Activated naive CD8-positive, alpha-beta T cell treated with anti-CD3 and anti-CD28 coated beads, Interleukin-2, amount 10 ng/mL, durations not matched to agents 7 days and 5 days (primary cell): ENCODE measurements at regions of chr5 and their contacts with region 1.

Region 1: GRCh38 chr5:131263648-131264450 is at the start of gene CDC42SE2:
- DNase-seq: peak; percentile 96
- ATAC-seq: peak; percentile 86
- H3K4me3 Mint-ChIP-seq: peak within 1 kb of the TSS; percentile 90
- H3K27ac Mint-ChIP-seq: peak within 1 kb of the TSS; percentile 89
- H3K4me1 Mint-ChIP-seq: peaks cover 38% of the 10 kb centered on the region
- H3K27me3 Mint-ChIP-seq: no peaks in the 10 kb centered on the region
- total RNA-seq, gene CDC42SE2: 193 to 199 TPM

Region 2: GRCh38 chr5:131209506-131210150 is 54.2 kb before region 1 on chr5:
- POLR2A ChIA-PET with region 1: interaction called, 32 read pairs
- DNase-seq: peak; percentile 38
- ATAC-seq: peak; percentile 95
- H3K4me3 Mint-ChIP-seq: peak overlapping the region; percentile 83
- H3K27ac Mint-ChIP-seq: peak overlapping the region; percentile 95
- H3K4me1 Mint-ChIP-seq: peaks cover 37% of the 10 kb centered on the region
- H3K27me3 Mint-ChIP-seq: no peaks in the 10 kb centered on the region

Region 3: GRCh38 chr5:131242728-131243255 is 21.1 kb before region 1 on chr5:
- POLR2A ChIA-PET with region 1: no interaction called
- DNase-seq: no peak
- ATAC-seq: no peak
- H3K4me3 Mint-ChIP-seq: no peak overlapping the region
- H3K27ac Mint-ChIP-seq: no peak overlapping the region
- H3K4me1 Mint-ChIP-seq: peaks cover 6% of the 10 kb centered on the region
- H3K27me3 Mint-ChIP-seq: peaks cover 2% of the 10 kb centered on the region

Region 4: DNA sequence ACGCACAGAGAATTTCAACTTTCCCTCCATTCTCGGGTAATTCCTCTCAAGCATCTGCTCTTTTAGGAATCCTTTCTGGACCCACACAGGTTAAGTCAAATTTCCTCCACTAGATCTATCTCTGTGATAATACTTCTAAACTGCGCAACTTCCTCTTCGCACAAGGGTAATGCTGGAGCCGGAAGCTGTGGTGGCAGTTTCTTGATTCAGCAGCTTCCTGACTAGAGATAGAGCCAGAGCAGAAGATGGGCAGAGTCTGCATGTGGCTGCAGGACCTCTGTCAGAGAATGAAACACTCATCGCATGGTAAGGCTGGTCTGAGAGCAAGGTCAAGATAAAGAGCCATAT is 11.1 kb before region 1 on chr5:
- POLR2A ChIA-PET with region 1: interaction called, 113 read pairs
- DNase-seq: peak; percentile 70
- ATAC-seq: peak; percentile 80
- H3K4me3 Mint-ChIP-seq: peak overlapping the region; percentile 98
- H3K27ac Mint-ChIP-seq: peak overlapping the region; percentile 98
- H3K4me1 Mint-ChIP-seq: peaks cover 61% of the 10 kb centered on the region
- H3K27me3 Mint-ChIP-seq: no peaks in the 10 kb centered on the region

Region 5: DNA sequence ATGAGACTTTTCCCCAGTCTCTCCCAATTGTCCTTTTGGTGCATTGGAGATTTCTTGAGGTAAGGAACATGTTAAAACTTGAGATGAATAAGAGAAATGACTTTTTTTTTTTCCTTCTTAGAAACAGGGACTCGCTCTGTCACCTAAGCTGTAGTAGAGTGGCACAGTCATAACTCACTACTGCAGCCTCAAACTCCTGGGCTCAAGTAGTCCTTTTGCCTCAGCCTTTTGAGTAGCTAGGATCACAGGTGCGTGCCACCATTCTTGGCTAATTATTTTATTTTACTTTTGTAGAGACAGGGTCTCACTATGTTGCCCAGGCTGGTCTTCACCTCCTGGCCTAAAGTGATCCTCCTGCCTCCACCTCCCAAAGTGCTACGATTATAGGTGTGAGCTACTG is 25.9 kb after region 1 on chr5:
- POLR2A ChIA-PET with region 1: interaction called, 30 read pairs
- DNase-seq: no peak
- ATAC-seq: peak; percentile 63
- H3K4me3 Mint-ChIP-seq: peak overlapping the region; percentile 87
- H3K27ac Mint-ChIP-seq: peak overlapping the region; percentile 94
- H3K4me1 Mint-ChIP-seq: peaks cover 46% of the 10 kb centered on the region
- H3K27me3 Mint-ChIP-seq: no peaks in the 10 kb centered on the region

Region 6: DNA sequence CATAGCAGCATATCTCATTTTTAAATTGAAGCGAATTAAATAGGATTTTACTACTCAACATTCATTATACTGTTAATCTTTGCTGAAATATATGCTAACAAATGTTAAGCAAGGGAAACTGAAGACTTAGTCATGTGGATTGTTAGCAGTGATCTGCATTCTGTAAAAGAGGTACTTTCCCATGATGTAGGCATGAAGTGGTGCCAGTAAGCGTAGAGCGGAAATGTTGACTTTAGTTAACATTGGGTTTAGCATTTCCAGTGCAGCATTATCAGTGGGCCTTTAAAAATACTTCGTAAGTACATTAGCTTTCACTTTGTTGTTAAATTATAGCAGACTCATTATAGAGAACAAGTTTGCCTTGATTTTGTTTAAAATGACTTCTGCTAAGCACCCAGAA is 130.3 kb after region 1 on chr5:
- POLR2A ChIA-PET with region 1: interaction called, 16 read pairs
- DNase-seq: no peak
- ATAC-seq: peak; percentile 87
- H3K4me3 Mint-ChIP-seq: peak overlapping the region; percentile 68
- H3K27ac Mint-ChIP-seq: peak overlapping the region; percentile 86
- H3K4me1 Mint-ChIP-seq: peaks cover 55% of the 10 kb centered on the region
- H3K27me3 Mint-ChIP-seq: no peaks in the 10 kb centered on the region